Thyroid gland (tissue), 4 donors: ENCODE measurements at regions of chr20 and their contacts with region 1.

Region 1: GRCh38 chr20:3218307-3218988 is 9.2 kb downstream of the ITPA start:
- DNase-seq: peak; percentile 62 to 80
- H3K4me3 ChIP-seq: no peak overlapping the region
- H3K27ac ChIP-seq: peak overlapping the region; percentile 79 to 83 (median 83)
- H3K4me1 ChIP-seq: peaks cover 38 to 44% of the 10 kb centered on the region in 2 donors
- H3K27me3 ChIP-seq: no peaks in the 10 kb centered on the region
- CTCF ChIP-seq: peak; percentile 80 to 96 (median 90)
- POLR2A ChIP-seq: no peak

Region 2: GRCh38 chr20:3276680-3277015 is 58.2 kb after region 1 on chr20:
- intact Hi-C with region 1: loop called (anchors 2 kb)
- DNase-seq: peak in 1 of 2 donors; percentile 24
- H3K4me3 ChIP-seq: no peak overlapping the region
- H3K27ac ChIP-seq: no peak overlapping the region
- H3K4me1 ChIP-seq: peaks cover 0 to 4% of the 10 kb centered on the region in 2 donors
- H3K27me3 ChIP-seq: no peaks in the 10 kb centered on the region
- CTCF ChIP-seq: peak in 4 of 6 experiments; percentile 28 to 44 (median 32)
- POLR2A ChIP-seq: no peak

Region 3: DNA sequence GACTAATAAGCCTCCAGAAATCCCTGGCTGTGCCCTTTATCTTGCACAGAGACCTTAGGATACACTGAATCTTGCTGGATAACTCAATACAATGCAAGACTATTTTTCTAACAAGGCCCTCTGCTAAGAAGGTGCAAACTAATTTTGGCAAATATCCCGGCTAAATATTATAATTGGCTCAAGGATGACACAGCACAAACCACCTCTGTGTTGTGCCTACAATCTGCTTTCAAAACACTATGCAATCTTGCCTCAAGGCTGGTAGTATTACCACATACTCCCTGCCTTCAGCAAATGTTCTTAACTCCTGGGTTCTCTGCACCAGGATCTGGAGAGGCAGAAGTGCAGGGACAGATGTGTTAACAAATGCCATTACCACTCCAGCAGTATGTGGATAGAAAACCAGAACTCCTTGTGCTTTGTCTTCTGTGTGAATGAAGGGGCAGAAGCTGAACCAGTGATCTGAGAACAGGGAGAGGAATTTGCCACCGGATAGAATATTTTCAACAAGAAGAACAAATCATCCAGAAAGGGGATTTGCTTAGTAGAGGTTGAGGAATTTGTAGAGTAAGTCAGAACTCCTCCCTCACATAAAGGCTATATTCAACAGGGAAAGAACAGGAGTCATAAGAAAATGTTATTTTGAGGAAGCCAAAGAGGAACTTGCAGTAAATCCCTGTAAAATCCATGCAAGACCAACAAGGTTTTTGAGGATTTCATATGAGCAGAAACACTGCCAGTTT is 94.7 kb after region 1 on chr20:
- intact Hi-C with region 1: loop called (anchors 5 kb)
- DNase-seq: peak; percentile 65 to 66
- H3K4me3 ChIP-seq: no peak overlapping the region
- H3K27ac ChIP-seq: peak overlapping the region; percentile 90 to 92 (median 92)
- H3K4me1 ChIP-seq: peaks cover 48 to 59% of the 10 kb centered on the region in 2 donors
- H3K27me3 ChIP-seq: no peaks in the 10 kb centered on the region
- CTCF ChIP-seq: no peak
- POLR2A ChIP-seq: peak in 1 of 2 donors; percentile 31